GM10248 (cell line): ENCODE measurements at regions of chr18 and their contacts with region 1.

Region 1: GRCh38 chr18:59249205-59249774 is 24.0 kb downstream of the RAX start:
- DNase-seq: peak; percentile 60
- CTCF ChIP-seq: peak; percentile 66

Region 2: DNA sequence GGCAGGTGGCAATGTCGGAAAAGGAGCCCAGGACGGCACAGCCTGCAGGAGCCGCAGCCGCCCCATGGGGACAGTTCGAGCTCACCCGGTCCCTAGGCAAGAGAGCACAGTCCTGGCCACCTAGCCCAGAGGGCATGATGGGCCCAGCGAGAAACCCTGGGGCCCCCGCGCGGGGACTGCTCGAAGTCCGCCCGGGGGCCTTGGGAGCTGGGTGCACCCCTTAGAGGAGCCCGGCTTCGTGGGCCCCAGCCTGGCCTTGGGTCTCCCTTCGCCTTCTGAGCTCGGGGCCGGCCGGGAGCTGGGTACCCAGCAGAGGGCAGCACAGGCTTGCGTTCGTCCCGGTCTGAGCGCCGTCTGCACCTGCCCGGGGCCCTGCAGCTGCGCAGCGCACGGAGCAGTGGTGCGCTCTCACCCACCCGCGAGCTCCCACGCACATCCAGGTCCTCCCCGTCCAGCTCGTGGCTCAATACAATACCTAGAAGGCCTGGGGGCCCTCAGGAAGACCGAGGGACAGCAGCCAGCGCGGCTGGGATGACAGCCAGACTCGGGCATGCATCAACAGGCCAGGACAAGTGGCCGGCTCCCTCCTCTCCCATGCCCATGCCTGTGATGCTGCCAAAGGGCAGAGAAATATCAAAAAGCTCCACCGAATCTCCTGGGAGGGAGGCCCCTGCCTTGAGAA is 480.9 kb before region 1 on chr18:
- CTCF ChIA-PET with region 1: no interaction called
- POLR2A ChIA-PET with region 1: no interaction called
- DNase-seq: peak; percentile 88
- CTCF ChIP-seq: peak; percentile 91

Region 3: GRCh38 chr18:59229681-59230443 is 19.4 kb before region 1 on chr18:
- CTCF ChIA-PET with region 1: interaction called, 10 read pairs
- POLR2A ChIA-PET with region 1: no interaction called
- DNase-seq: no peak
- CTCF ChIP-seq: no peak

Region 4: DNA sequence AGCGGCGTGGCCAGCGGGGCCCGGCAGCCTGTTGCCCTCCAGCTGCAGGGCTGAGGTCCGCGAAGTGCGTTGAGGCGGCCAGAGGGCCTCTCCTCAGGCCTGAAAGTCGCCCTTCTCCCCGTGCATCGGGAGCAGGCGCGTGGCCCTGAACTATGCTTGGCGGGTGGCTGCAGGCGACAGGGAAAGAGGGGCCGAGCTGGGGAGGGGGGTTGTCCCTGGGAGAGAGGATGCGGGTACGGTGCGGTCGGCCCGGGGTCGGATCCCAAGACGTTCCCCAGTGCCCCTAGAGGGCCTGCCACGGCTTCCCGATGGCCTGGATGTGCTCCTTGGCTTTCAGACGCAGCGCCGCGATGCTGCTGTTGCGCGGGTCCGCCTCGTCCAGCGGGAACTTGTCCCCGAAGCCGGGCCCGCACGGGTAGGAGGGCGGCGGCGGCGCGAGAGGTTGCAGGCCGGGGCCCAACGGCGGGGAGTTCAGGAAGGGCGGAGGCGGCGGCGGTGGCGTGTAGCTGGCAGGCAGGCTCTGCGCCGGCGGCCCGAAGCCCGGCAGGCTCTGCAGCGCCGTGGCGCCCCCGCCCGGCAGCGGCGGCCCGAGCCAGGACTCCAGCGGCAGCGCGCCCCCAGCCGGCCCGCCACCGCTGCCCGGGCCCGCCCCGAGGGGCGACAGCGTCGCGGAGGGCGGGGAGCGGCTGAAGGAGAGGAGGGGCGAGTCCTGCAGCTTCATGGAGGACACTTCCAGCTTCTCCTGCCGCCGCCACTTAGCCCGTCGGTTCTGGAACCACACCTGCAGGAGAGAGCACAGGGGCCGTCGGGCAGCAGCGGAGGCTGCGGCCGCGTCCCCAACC is 19.7 kb after region 1 on chr18:
- CTCF ChIA-PET with region 1: interaction called, 20 read pairs
- POLR2A ChIA-PET with region 1: no interaction called
- DNase-seq: peak; percentile 77
- CTCF ChIP-seq: peak; percentile 56

Region 5: GRCh38 chr18:59279193-59279592 is 29.9 kb after region 1 on chr18:
- CTCF ChIA-PET with region 1: interaction called, 12 read pairs
- POLR2A ChIA-PET with region 1: no interaction called
- DNase-seq: no peak
- CTCF ChIP-seq: no peak